WTC11 (cell line): ENCODE measurements at regions of chr2 and their contacts with region 1.

Region 1: GRCh38 chr2:160336105-160336504 is 136.0 kb upstream of the ITGB6 start:
- DNase-seq: no peak
- ATAC-seq: no peak
- H3K4me3 Mint-ChIP-seq: no peak overlapping the region
- H3K27ac Mint-ChIP-seq: no peak overlapping the region
- H3K4me1 Mint-ChIP-seq: peaks cover 38% of the 10 kb centered on the region
- H3K27me3 Mint-ChIP-seq: no peaks in the 10 kb centered on the region
- CTCF ChIP-seq: no peak

Region 2: DNA sequence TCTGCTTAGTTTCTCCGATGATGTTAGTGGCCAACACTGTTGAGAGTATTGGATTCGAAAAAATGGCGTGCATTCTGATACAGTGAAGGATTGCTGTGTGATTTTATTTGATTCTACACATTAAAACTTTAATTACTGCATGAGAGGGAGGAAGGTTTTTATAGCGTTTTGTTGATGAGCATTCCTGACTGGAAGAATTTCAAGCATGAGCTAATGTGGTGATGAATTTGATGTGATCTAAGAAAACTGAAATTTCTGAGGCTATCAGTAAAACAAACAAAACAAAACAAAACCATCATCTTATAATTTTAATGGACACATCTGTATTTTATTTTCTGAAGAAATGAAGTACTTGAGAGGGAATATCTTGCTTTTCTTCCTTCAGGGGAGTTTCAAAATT is 195.6 kb before region 1 on chr2:
- CTCF ChIA-PET with region 1: no interaction called
- POLR2A ChIA-PET with region 1: no interaction called
- DNase-seq: no peak
- ATAC-seq: no peak
- H3K4me3 Mint-ChIP-seq: no peak overlapping the region
- H3K27ac Mint-ChIP-seq: no peak overlapping the region
- H3K4me1 Mint-ChIP-seq: no peaks in the 10 kb centered on the region
- H3K27me3 Mint-ChIP-seq: no peaks in the 10 kb centered on the region
- CTCF ChIP-seq: no peak

Region 3: GRCh38 chr2:160324161-160324800 is 11.8 kb before region 1 on chr2:
- CTCF ChIA-PET with region 1: interaction called, 12 read pairs
- POLR2A ChIA-PET with region 1: no interaction called
- DNase-seq: peak; percentile 51
- ATAC-seq: peak; percentile 61
- H3K4me3 Mint-ChIP-seq: no peak overlapping the region
- H3K27ac Mint-ChIP-seq: no peak overlapping the region
- H3K4me1 Mint-ChIP-seq: peaks cover 48% of the 10 kb centered on the region
- H3K27me3 Mint-ChIP-seq: no peaks in the 10 kb centered on the region
- CTCF ChIP-seq: 0 out of 2 replicates have a peak, but pooled peaks have one; percentile 29

Region 4: DNA sequence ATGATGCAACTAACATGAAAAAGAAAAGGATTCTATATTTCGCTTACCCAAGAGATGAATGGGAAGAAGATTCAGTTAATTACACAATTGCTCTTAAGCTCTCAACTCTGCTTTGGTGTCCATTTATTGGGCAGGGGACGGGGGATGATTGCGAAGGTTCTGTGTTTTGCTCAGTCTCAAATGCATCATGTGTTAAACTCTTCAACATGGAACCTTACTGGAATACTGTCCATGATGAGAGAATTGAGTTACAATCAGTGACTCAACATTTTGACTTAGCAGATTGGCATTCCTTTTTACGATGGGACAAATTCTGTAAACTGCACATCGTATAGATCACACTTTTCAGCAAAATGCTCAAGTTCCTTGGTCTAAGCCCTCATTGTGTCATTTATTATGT is 21.9 kb after region 1 on chr2:
- CTCF ChIA-PET with region 1: no interaction called
- POLR2A ChIA-PET with region 1: no interaction called
- DNase-seq: no peak
- ATAC-seq: no peak
- H3K4me3 Mint-ChIP-seq: no peak overlapping the region
- H3K27ac Mint-ChIP-seq: no peak overlapping the region
- H3K4me1 Mint-ChIP-seq: peaks cover 42% of the 10 kb centered on the region
- H3K27me3 Mint-ChIP-seq: no peaks in the 10 kb centered on the region
- CTCF ChIP-seq: no peak

Region 5: DNA sequence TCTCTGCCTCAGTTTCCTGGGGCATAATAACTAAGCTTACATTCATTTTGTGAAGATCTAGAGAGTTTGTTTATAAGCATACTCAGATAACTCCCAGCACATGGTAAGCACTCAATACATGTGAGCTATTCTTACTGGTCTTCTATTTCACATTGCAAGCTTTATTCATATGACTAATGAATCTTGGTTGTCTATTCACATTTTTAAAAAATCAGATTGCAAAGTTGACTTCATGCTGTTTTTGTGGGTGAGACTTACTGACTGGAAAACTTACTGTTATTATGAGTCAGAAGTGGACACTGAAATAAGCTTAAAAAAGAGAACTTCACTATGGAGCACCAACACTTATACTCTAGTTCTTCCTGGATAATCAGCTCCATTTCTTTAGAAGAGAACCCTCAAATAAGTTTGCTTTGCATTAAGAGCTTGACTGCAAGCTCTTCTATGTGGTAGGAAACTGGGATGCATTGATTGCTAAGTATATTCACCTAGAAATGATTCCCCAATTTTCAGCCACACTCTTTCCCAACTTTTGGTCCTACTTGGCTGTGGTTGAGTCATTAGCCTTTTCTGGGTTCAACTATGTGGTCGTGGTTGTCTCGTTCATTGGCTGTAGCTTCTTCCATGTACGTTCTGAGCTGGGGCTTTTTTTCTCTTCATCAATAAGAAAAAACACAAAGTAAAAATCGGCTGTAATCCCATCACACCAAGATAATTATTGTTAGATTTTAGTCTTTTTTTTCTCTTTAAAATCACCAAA is 187.0 kb after region 1 on chr2:
- CTCF ChIA-PET with region 1: no interaction called
- POLR2A ChIA-PET with region 1: no interaction called
- DNase-seq: no peak
- ATAC-seq: no peak
- H3K4me3 Mint-ChIP-seq: no peak overlapping the region
- H3K27ac Mint-ChIP-seq: no peak overlapping the region
- H3K4me1 Mint-ChIP-seq: 0 out of 2 replicates have a peak, but pooled peaks cover 3% of the 10 kb centered on the region
- H3K27me3 Mint-ChIP-seq: no peaks in the 10 kb centered on the region; the same call in 1 of the 2 replicates
- CTCF ChIP-seq: no peak